ENCODE measurements at regions of chr4 and their contacts with region 1.

Region 1: GRCh38 chr4:153344131-153345010 is at the start of gene MND1:
- DNase-seq: peak; percentile 93
- H3K4me3 Mint-ChIP-seq: peak within 1 kb of the TSS; percentile 84
- H3K27ac Mint-ChIP-seq: peak within 1 kb of the TSS; percentile 77
- H3K4me1 Mint-ChIP-seq: peaks cover 46% of the 10 kb centered on the region
- H3K27me3 Mint-ChIP-seq: peaks cover 11% of the 10 kb centered on the region
- total RNA-seq, gene MND1: 20.8 to 21.7 TPM

Region 2: DNA sequence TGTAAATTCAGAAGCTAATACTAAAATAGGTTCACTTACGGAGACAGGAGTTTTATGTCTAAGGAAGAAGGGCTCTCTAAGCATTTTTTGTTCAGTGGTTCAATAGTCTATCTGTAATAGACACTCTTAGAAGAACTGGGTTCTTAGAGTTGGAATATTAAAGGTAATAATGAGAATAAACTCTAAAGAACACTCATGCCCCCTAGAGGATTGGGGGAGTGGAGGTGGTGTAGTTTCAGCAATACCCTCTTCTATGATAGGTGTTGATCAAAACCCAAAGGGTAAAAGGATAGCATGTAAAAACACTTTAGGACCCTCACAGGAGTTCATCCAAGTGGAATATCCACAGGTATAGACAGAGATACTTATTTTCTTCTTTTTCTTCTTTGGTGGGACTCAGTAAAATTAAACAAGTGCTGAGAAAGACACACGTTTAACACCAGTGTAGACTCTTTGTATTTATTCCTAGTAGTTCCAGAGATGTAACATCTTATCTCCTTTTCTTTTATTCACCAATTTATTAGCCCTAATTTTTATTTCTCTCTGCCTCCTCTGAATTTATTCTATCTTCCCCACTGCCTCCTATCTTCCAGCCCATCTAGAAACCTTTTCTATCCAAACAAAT is 25.6 kb before region 1 on chr4:
- CTCF ChIA-PET with region 1: no interaction called
- POLR2A ChIA-PET with region 1: no interaction called
- DNase-seq: no peak
- H3K4me3 Mint-ChIP-seq: no peak overlapping the region
- H3K27ac Mint-ChIP-seq: no peak overlapping the region
- H3K4me1 Mint-ChIP-seq: no peaks in the 10 kb centered on the region
- H3K27me3 Mint-ChIP-seq: no peaks in the 10 kb centered on the region

Region 3: DNA sequence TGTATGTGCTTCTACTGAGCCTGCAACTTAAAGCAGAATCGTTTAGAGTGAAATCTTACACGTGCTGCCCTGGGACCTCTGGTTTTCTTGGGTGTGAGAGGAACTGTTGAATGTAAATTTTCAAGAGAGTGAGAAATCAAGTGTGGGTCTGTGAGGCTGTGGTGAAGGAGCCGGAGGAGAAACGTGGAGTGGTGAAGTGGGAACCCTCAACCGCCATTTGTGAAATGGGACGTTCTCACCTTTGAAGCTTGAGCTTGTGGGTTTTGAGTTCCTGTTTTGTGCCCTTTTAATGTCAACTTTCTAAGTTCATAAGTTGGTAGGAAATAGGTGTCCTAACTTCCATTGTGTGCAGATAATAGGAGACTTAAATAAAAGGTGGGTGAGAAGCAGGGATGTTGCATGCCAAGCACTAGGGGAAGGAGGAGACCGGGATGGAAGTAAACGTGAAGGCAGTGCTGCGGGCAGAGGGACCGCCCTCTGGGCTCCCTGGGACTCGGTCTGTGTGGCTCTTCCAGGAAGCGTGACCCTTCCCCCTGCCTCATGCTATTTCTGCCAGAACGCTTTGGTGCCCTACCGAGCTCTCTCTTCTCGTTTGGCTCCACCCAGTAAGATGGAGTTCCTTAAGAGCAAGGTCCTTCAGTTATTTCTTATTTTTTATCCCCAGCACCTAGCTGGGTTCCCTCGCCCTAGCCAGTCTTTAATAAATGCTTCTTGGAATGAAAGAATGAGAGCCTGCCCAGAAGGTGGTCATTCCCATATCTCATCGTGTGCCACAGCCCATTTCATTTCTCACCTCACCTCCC is 177.8 kb after region 1 on chr4:
- CTCF ChIA-PET with region 1: interaction called, 11 read pairs
- POLR2A ChIA-PET with region 1: interaction called, 9 read pairs
- DNase-seq: peak; percentile 79
- H3K4me3 Mint-ChIP-seq: peak overlapping the region; percentile 54
- H3K27ac Mint-ChIP-seq: peak overlapping the region; percentile 91
- H3K4me1 Mint-ChIP-seq: peaks cover 88% of the 10 kb centered on the region
- H3K27me3 Mint-ChIP-seq: no peaks in the 10 kb centered on the region

Region 4: GRCh38 chr4:153585026-153585425 is 240.7 kb after region 1 on chr4:
- CTCF ChIA-PET with region 1: interaction called, 11 read pairs
- POLR2A ChIA-PET with region 1: interaction called, 5 read pairs
- DNase-seq: no peak
- H3K4me3 Mint-ChIP-seq: no peak overlapping the region
- H3K27ac Mint-ChIP-seq: no peak overlapping the region
- H3K4me1 Mint-ChIP-seq: peaks cover 7% of the 10 kb centered on the region
- H3K27me3 Mint-ChIP-seq: no peaks in the 10 kb centered on the region

Region 5: GRCh38 chr4:153649572-153649991 is 305.2 kb after region 1 on chr4:
- CTCF ChIA-PET with region 1: interaction called, 64 read pairs
- POLR2A ChIA-PET with region 1: interaction called, 11 read pairs
- DNase-seq: no peak
- H3K4me3 Mint-ChIP-seq: no peak overlapping the region
- H3K27ac Mint-ChIP-seq: no peak overlapping the region
- H3K4me1 Mint-ChIP-seq: peaks cover 31% of the 10 kb centered on the region
- H3K27me3 Mint-ChIP-seq: no peaks in the 10 kb centered on the region